ENCODE measurements at regions of chr1 and their contacts with region 1.

Region 1: DNA sequence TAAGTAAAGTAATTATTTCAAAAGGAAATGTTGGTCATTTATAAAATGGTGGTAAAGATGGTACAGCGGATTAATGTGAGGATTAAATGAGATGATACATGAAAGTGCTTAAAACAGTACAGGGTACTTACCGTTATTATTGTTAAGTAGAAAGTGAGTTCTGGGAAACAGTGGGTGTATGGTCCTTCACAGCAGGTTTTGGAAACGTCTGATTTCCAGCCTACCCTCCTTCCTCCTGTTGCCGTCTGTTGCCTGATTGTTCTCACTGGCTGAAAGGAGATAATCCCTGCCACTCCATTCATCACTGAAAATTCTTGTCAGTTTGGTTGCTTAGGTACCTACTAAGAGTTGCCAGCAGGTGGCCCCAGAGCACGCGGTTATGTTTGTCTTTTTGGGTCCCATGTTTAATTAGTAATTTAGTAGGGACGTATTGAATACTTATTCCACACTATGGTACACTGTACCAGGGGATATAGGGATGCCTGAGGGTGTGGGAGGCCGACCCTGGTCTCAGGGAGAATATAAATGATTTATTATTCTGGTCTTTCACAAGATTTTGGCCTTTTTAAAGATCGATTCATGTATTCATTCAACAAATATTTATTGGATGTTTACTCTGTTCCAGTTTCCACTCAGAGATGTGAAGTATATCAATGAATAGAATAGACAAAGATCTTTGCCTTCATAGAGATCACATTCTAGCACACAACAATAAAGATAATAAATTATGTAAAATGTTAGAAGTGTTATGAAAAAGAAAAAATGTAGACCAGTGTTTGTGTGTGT is 30.8 kb upstream of the RPTN start:
- DNase-seq: peak; percentile 66
- H3K4me3 ChIP-seq: peak overlapping the region in 1 of 3 experiments; percentile 41
- H3K27ac ChIP-seq: no peak overlapping the region
- H3K4me1 ChIP-seq: peaks cover 49% of the 10 kb centered on the region
- H3K27me3 ChIP-seq: no peaks in the 10 kb centered on the region
- CTCF ChIP-seq: peak; percentile 81 to 84

Region 2: DNA sequence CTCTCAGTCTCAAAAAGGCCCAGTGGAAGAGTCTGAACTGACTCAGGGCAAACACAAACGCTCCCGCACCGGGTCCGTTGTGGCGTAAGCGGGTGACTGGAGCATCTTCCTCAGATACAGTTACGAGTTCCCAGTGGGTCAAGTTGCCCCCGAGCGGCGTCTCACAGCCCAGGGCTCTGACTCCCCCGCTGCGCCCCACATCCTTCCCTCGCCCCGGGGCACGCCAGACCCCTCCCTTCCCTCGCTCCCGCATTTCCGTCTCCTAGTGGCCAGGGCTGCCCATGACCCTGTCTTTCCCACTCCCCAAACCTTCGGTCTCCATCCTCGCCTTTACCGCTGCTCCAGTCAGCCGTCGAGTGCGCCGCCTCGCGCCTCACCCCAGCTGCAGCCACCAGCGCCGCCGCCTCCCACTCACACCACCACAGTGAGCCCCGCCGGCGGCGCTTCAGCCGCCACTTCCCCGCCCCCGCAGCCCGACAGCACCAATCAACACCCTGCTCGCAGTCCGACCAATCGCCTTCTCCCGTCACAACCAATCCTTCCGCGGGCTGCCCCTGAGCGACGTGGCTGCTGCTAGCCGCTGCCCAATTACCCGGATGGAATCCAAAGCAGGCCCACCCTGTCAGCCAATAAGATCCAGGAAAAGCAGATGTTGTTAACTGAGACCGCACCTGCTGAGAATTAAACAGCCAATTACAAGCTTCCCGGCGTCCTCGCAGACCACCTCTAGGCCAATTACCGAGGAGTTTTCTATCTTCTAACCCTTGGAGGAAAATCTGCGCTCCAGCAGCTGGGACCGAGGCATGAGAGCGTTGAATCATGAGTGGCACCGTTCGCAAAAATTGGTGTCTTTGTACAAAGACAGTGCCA is 399.5 kb before region 1 on chr1 and contains the start of gene TDRKH:
- CTCF ChIA-PET with region 1: no interaction called
- dilution Hi-C with region 1: no loop called
- in situ Hi-C with region 1: no loop called
- intact Hi-C with region 1: no loop called
- DNase-seq: peak; percentile 100
- H3K4me3 ChIP-seq: peak within 1 kb of the TSS; percentile 65 to 98 (median 72)
- H3K27ac ChIP-seq: no peak within 1 kb of the TSS
- H3K4me1 ChIP-seq: no peaks in the 10 kb centered on the region
- H3K27me3 ChIP-seq: no peaks in the 10 kb centered on the region
- CTCF ChIP-seq: peak in 1 of 2 donors; percentile 39
- total RNA-seq, gene TDRKH: 3.0 to 9.3 TPM

Region 3: GRCh38 chr1:152110860-152111514 is 78.9 kb before region 1 on chr1:
- CTCF ChIA-PET with region 1: interaction called, 3 read pairs
- dilution Hi-C with region 1: no loop called
- in situ Hi-C with region 1: no loop called
- intact Hi-C with region 1: loop called (anchors 2 kb)
- DNase-seq: peak; percentile 71
- H3K4me3 ChIP-seq: peak overlapping the region; percentile 54 to 65 (median 55)
- H3K27ac ChIP-seq: no peak overlapping the region
- H3K4me1 ChIP-seq: peaks cover 51% of the 10 kb centered on the region
- H3K27me3 ChIP-seq: peaks cover 29% of the 10 kb centered on the region
- CTCF ChIP-seq: no peak

Region 4: DNA sequence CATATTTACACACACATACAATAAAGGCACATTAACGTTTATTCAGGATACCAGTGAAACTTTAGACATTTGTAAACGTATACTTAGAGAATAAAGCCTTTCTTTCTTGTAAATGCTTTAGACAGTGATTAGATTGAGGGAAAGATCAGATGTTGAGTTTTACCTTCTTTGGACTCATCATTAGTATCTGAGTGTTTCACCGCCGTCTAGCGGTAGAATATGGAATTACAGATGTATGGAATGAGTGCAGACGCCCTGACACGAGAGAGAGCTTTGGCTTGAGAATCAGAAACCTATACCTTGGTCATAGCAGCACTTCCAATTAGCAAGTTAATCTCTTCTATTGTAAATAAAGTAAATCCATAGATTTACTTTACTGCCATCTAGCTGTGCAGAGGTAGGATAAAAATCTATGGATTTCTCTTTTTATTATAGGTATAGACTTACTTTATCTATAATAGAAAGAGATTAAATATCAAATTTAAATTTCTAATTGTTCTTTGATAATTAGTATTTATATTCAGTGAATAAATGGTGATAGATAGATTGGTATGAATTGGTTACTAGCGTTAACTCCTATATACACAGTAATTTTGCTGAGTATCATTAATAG is 157.4 kb after region 1 on chr1:
- CTCF ChIA-PET with region 1: no interaction called
- dilution Hi-C with region 1: no loop called
- in situ Hi-C with region 1: loop called in 1 of 2 experiments (anchors 5 kb)
- intact Hi-C with region 1: loop called (anchors 1 kb)
- DNase-seq: peak; percentile 64
- H3K4me3 ChIP-seq: no peak overlapping the region
- H3K27ac ChIP-seq: no peak overlapping the region
- H3K4me1 ChIP-seq: no peaks in the 10 kb centered on the region
- H3K27me3 ChIP-seq: peaks cover 7% of the 10 kb centered on the region
- CTCF ChIP-seq: peak; percentile 93 to 99

Region 5: GRCh38 chr1:152440635-152441471 is 251.0 kb after region 1 on chr1:
- CTCF ChIA-PET with region 1: no interaction called
- dilution Hi-C with region 1: no loop called
- in situ Hi-C with region 1: loop called (anchors 5 to 10 kb)
- intact Hi-C with region 1: loop called (anchors 1 kb)
- DNase-seq: peak; percentile 68
- H3K4me3 ChIP-seq: no peak overlapping the region
- H3K27ac ChIP-seq: no peak overlapping the region
- H3K4me1 ChIP-seq: peaks cover 34% of the 10 kb centered on the region
- H3K27me3 ChIP-seq: no peaks in the 10 kb centered on the region
- CTCF ChIP-seq: peak; percentile 91 to 92

Region 6: GRCh38 chr1:152459596-152460528 is 270.0 kb after region 1 on chr1:
- CTCF ChIA-PET with region 1: interaction called, 16 read pairs
- dilution Hi-C with region 1: no loop called
- in situ Hi-C with region 1: no loop called
- intact Hi-C with region 1: loop called (anchors 1 kb)
- DNase-seq: peak; percentile 48
- H3K4me3 ChIP-seq: no peak overlapping the region
- H3K27ac ChIP-seq: no peak overlapping the region
- H3K4me1 ChIP-seq: peaks cover 5% of the 10 kb centered on the region
- H3K27me3 ChIP-seq: no peaks in the 10 kb centered on the region
- CTCF ChIP-seq: peak; percentile 86 to 94

Measured in mammary epithelial cell (primary cell).